ENCODE measurements at regions of chr16 and their contacts with region 1.

Region 1: GRCh38 chr16:81314603-81315270 is at the start of gene GAN:
- DNase-seq: peak; percentile 98
- H3K4me3 ChIP-seq: peak within 1 kb of the TSS; percentile 49 to 95 (median 88)
- H3K27ac ChIP-seq: peak within 1 kb of the TSS; percentile 93 to 96 (median 95)
- H3K4me1 ChIP-seq: peaks cover 0 to 58% (median 49%) of the 10 kb centered on the region in 4 donors
- H3K27me3 ChIP-seq: no peaks in the 10 kb centered on the region
- CTCF ChIP-seq: no peak
- EP300 ChIP-seq: peak in 1 of 4 donors; percentile 54
- POLR2A ChIP-seq: peak; percentile 75 to 82
- total RNA-seq, gene GAN: 9.1 to 14.7 (median 13.4) TPM

Region 2: DNA sequence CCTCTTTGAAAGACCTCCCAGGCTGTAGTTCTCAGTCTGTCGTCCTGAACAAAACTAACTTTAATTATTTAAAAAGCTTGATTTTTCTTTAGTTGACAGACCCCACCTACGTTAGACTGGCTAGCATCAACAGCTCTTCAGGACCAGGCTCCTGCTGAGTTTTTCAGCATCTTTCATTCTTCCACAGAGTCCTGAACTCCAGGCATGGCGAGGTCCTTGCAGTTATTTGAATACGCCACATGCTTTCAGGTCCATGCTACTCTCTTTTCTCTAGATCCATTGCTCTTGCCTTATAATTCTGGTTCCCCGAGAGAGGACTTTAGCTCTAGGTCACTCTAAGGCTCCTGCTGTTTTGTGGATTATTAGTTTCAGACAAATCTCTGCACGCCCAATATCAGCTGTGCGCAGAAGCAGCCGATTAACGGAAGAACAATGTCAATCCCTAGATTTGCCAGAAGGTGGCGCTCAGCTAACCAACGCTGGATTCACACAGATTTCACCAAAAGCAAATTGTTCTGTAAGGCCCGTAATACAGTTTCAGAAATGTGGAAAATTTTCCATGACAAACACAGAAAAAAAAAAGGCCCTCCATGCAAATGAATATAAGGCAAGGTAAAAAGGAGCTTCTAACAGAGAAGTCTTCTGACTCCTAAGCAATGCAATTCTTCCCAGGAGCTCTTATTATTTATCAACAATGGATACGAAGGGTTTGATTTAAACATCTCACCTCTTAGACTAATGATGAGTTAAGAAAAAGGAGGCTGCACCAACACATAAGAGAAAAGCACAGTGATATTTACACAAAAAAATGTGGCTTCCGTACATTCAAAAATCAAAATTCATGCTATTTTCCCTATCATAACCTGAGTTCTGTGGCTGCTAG is 109.7 kb before region 1 on chr16:
- intact Hi-C with region 1: loop called (anchors 5 kb)
- DNase-seq: peak; percentile 76
- H3K4me3 ChIP-seq: no peak overlapping the region
- H3K27ac ChIP-seq: no peak overlapping the region
- H3K4me1 ChIP-seq: no peaks in the 10 kb centered on the region
- H3K27me3 ChIP-seq: no peaks in the 10 kb centered on the region
- CTCF ChIP-seq: peak; percentile 19 to 74 (median 61)
- EP300 ChIP-seq: no peak
- POLR2A ChIP-seq: no peak

Region 3: DNA sequence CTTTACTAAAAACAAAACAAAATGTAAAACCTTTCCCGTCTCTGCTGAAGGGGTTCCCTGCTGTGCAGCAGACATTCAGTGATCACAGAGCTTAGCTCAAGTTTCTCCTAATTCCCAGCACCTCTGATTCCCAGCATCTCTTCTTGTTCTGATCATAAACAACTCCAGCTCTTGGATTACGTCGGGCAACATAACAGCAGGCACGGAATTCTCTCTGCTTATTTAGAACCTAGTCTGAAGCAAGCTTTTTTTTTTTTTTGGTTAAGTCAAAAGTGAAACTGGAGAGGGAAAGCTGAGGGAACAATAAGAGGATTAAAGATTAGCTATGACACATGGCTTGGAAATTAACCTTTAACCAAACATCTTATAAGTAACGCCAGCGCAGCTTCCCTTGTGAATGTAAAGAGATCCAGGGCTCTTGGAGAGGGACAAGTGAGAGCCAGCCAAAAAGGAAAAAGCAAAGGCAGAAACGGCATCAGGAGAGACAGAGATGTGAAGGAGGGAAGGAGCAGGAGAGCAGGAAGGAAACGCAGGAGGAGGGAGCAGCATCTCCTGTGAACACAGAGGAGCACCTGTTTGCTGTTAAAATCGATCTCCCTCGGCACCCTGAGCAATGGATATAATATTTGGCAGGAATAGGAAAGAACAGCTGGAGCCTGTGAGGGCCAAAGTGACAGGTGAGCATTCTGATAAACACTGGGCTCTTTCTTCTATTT is 76.3 kb before region 1 on chr16 and contains the start of gene BCO1:
- intact Hi-C with region 1: loop called (anchors 2 kb)
- DNase-seq: no peak
- H3K4me3 ChIP-seq: peak within 1 kb of the TSS; percentile 22 to 41 (median 39)
- H3K27ac ChIP-seq: peak within 1 kb of the TSS; percentile 74 to 91 (median 86)
- H3K4me1 ChIP-seq: peaks cover 0 to 23% (median 21%) of the 10 kb centered on the region in 4 donors
- H3K27me3 ChIP-seq: no peaks in the 10 kb centered on the region
- CTCF ChIP-seq: no peak
- EP300 ChIP-seq: peak in 1 of 4 donors; percentile 49
- POLR2A ChIP-seq: no peak
- total RNA-seq, gene BCO1: 0.83 to 3.1 (median 2.1) TPM in 3 of 4 donors, not detected in the other

Region 4: GRCh38 chr16:81265657-81266451 is 48.9 kb before region 1 on chr16:
- intact Hi-C with region 1: loop called (anchors 2 kb)
- DNase-seq: peak; percentile 95
- H3K4me3 ChIP-seq: no peak overlapping the region
- H3K27ac ChIP-seq: peak overlapping the region in 3 of 4 donors; percentile 76 to 78 (median 77)
- H3K4me1 ChIP-seq: peaks cover 0 to 46% (median 35%) of the 10 kb centered on the region in 4 donors
- H3K27me3 ChIP-seq: no peaks in the 10 kb centered on the region
- CTCF ChIP-seq: no peak
- EP300 ChIP-seq: peak in 1 of 4 donors; percentile 63
- POLR2A ChIP-seq: no peak